ENCODE measurements at regions of chr16 and their contacts with region 1.

Region 1: DNA sequence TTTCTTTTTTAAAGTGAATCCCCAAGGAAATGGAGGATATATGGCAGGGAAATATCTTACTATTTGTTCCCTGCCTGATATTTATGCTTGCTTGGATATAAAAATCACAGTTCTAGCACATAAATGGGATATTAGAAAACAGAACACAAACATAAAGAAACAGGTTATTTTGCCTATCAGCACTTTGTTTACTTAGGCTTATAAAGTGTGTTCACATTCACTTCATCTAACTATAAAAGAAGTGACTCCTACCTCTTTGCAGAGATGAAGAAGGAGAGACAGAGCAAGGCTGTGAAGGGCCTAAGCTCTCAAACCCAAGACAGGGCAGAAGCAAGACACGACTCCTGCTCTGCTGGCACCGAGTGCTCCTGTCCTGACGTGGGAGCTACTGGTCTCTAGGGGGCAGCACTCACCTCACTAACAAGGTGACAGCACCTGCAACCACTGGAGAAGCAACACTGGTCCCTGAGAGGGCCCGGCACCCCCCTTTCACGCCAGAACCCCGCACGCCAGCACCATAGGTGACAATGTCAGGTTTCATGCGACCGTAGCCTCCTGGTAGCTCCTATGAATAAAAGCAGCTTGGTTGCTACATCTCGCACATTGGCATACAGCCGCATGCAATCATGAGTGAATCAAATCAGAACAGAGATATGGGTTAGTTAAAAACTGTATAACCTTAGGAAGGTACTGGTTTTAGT is 32.0 kb downstream of the MBTPS1 start:
- DNase-seq: peak; percentile 79 to 89
- ATAC-seq: peak; percentile 91 to 96
- H3K4me3 ChIP-seq: no peak overlapping the region
- H3K27ac ChIP-seq: no peak overlapping the region
- H3K4me1 ChIP-seq: no peaks in the 10 kb centered on the region
- CTCF ChIP-seq: peak; percentile 80
- EP300 ChIP-seq: no peak
- POLR2A ChIP-seq: no peak
- RAD21 ChIP-seq: peak; percentile 70 to 73

Region 2: GRCh38 chr16:83946781-83947566 is 137.7 kb before region 1 on chr16:
- CTCF ChIA-PET with region 1: no interaction called
- POLR2A ChIA-PET with region 1: no interaction called
- DNase-seq: no peak
- ATAC-seq: no peak; a peak in 1 of 6 replicates
- H3K4me3 ChIP-seq: no peak overlapping the region
- H3K27ac ChIP-seq: peak overlapping the region in 1 of 2 experiments; percentile 2; a peak in 1 of 6 replicates
- H3K4me1 ChIP-seq: peaks cover 6% of the 10 kb centered on the region; the same call in 2 of the 3 replicates
- CTCF ChIP-seq: no peak
- EP300 ChIP-seq: no peak
- POLR2A ChIP-seq: no peak
- RAD21 ChIP-seq: no peak

Region 3: DNA sequence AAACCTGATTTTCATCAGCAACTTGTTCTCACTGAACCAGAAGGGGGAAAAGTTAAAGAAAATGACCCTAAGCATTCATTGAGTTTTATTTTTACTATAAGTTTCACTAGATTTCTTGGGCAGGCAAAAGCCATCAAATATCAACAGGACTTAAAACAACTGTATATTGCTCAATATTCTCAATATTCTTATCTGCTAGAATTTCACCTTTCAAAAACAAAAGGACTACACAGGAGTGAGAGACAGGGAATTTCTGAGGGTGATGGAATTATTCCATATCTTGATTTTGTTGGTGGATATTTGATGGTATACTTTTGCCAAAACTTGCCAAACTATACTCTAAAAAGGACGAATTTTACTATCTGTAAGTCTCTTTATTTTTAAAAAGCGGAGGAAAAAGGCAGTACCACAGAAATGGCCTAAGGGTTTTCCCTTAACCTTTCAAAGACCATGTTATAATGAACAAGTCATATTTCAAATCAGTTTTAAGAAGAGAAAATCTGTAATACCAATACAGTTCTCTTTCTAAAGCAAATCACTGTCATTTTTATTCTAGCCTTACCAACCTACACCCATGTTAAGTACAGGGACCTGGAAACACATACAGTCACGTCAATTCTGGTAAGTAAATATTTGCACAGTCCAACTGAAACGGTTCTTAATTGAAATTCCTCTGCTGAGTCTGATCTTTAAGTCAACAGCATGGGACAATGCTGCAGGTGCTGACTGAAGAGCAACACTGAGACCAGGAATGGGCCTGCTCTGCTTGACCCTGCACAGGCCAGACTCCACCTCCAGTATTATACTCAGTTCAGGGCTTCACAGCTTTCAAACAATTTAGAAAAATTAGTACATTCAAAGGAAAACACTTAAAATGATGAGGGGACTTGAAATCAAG is 11.6 kb after region 1 on chr16:
- CTCF ChIA-PET with region 1: interaction called, 21 read pairs
- POLR2A ChIA-PET with region 1: no interaction called
- DNase-seq: peak in 1 of 2 experiments; percentile 70
- ATAC-seq: peak; percentile 47 to 87; a peak in 4 of 6 replicates
- H3K4me3 ChIP-seq: no peak overlapping the region
- H3K27ac ChIP-seq: no peak overlapping the region
- H3K4me1 ChIP-seq: peaks cover 32% of the 10 kb centered on the region
- CTCF ChIP-seq: no peak
- EP300 ChIP-seq: no peak
- POLR2A ChIP-seq: no peak
- RAD21 ChIP-seq: no peak

Region 4: DNA sequence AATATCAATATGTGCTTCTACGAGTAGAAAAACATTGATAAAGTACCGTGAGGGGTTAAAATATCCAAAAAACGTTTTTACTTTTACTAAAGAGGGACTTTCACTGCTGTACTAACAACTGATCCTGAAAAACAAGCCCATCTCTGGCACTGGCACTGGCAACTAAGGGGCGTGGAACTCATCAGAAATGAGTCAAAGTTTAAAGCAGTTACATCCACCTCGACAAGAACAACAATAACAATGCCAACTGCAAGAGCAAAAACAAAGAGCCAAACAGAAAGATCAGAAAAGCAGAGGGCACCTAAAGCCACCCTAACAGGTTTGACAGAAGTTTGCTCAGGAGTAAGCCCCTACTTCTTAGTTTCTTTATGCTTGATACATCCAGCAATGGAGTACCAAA is 19.0 kb after region 1 on chr16:
- CTCF ChIA-PET with region 1: interaction called, 21 read pairs
- POLR2A ChIA-PET with region 1: no interaction called
- DNase-seq: no peak
- ATAC-seq: no peak
- H3K4me3 ChIP-seq: no peak overlapping the region
- H3K27ac ChIP-seq: no peak overlapping the region
- H3K4me1 ChIP-seq: peaks cover 23% of the 10 kb centered on the region
- CTCF ChIP-seq: no peak
- EP300 ChIP-seq: no peak
- POLR2A ChIP-seq: no peak
- RAD21 ChIP-seq: no peak

Region 5: GRCh38 chr16:84110527-84110926 is 25.8 kb after region 1 on chr16:
- CTCF ChIA-PET with region 1: interaction called, 19 read pairs
- POLR2A ChIA-PET with region 1: no interaction called
- DNase-seq: no peak
- ATAC-seq: no peak
- H3K4me3 ChIP-seq: no peak overlapping the region
- H3K27ac ChIP-seq: no peak overlapping the region
- H3K4me1 ChIP-seq: peaks cover 7% of the 10 kb centered on the region
- CTCF ChIP-seq: no peak
- EP300 ChIP-seq: no peak
- POLR2A ChIP-seq: no peak
- RAD21 ChIP-seq: no peak

Region 6: DNA sequence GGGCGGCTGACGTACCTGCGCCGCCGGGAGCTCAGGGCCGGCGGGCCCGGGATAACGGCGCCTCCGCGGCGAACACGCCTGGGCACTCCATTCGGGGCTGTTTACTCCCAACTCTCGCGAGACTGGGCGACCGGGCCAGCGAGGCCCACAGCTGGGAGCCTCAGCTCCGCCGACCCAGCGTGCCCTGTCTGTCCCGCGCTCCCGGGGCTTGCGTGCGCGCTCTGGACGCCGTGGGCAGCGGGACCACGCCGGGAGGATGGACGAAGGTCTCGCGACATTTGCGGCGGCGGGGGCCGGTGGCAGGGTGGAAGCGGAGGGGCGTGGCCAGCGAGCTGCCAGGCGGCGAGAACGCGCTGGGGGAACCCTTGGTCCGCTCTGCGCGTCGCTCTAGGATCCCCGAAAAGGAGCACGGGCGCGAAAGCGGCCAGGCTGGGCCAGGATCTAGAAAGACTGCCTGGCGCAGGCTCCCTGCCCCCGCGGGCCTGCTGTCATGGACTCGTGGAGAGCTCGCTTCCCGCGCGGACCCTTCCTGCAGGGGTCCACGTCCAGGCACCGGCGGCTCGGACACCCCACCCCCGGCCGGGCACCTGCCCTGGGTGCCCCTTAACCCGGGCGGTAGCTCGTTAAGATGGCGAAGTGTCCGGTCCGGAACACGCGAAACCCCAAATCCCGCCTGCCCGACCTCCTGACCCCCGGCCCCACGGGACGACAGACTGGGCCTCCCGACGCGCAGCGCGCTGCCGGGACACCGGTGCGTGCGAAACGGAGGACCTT is 32.2 kb after region 1 on chr16 and contains the start of gene MBTPS1:
- CTCF ChIA-PET with region 1: interaction called, 19 read pairs
- POLR2A ChIA-PET with region 1: interaction called, 3 read pairs
- DNase-seq: peak; percentile 94 to 98
- ATAC-seq: peak; percentile 96 to 98
- H3K4me3 ChIP-seq: peak within 1 kb of the TSS; percentile 76
- H3K27ac ChIP-seq: peak within 1 kb of the TSS; percentile 88 to 96
- H3K4me1 ChIP-seq: peaks cover 8% of the 10 kb centered on the region
- CTCF ChIP-seq: no peak; the same call in 2 of the 3 replicates
- EP300 ChIP-seq: no peak; a peak in 1 of 5 replicates
- POLR2A ChIP-seq: peak; percentile 70
- RAD21 ChIP-seq: no peak
- polyA plus RNA-seq, gene MBTPS1: 76.7 and 88.4 TPM in 2 replicates

Region 7: GRCh38 chr16:84175350-84176081 is 90.8 kb after region 1 on chr16:
- CTCF ChIA-PET with region 1: interaction called, 43 read pairs
- POLR2A ChIA-PET with region 1: no interaction called
- DNase-seq: peak in 1 of 2 experiments; percentile 55
- ATAC-seq: peak; percentile 69 to 81
- H3K4me3 ChIP-seq: no peak overlapping the region
- H3K27ac ChIP-seq: peak overlapping the region in 1 of 2 experiments; percentile 72; a peak in 2 of 6 replicates
- H3K4me1 ChIP-seq: peaks cover 29% of the 10 kb centered on the region
- CTCF ChIP-seq: peak; percentile 40; the same call in 2 of the 3 replicates
- EP300 ChIP-seq: no peak
- POLR2A ChIP-seq: no peak
- RAD21 ChIP-seq: peak; percentile 53 to 59

Region 8: GRCh38 chr16:84194470-84195200 is 109.9 kb after region 1 on chr16:
- CTCF ChIA-PET with region 1: no interaction called
- POLR2A ChIA-PET with region 1: no interaction called
- DNase-seq: no peak
- ATAC-seq: no peak
- H3K4me3 ChIP-seq: no peak overlapping the region
- H3K27ac ChIP-seq: no peak overlapping the region
- H3K4me1 ChIP-seq: no peaks in the 10 kb centered on the region
- CTCF ChIP-seq: no peak
- EP300 ChIP-seq: no peak
- POLR2A ChIP-seq: no peak
- RAD21 ChIP-seq: no peak

Measured in A549 (cell line).